Heart left ventricle (tissue), 16 donors: ENCODE measurements at regions of chr1 and their contacts with region 1.

Region 1: DNA sequence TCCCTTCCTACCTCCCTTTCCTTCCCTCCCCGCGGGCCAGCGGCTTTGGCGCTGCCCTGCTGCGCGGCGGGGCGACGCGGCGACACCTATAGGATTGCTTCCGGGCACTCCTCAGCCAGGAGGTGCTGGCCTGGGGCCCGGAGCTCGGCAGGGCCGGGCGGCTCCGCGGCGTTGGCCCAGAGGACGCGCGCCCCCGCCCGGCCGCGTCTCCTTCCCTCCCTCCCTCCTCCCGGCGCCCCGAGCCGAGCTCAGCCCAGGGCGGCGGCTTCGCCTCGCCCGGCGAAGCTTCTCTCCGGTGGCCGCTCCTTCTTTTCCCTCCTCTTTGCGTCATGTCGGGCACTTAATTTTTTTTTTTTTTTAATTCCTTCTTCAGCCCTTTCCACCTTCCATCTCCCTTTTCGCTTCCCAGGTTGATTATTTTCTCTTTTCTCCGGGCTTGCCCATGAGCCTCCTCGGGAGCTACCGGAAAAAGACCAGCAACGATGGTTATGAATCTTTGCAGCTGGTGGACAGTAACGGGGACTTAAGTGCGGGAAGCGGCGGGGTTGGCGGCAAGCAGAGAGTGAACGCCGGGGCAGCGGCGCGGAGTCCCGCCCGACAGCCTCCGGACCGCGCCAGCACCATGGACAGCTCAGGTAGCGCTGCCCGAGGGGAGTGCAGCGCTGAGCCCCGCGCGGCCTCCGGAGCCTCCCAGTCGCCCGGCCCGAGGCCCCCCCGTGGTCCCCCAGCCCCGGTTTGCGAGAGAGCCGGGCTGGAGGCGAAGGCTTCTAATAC is at the start of gene DNAJC6:
- DNase-seq: peak; percentile 69 to 82 (median 73)
- ATAC-seq: peak; percentile 93 to 100 (median 98)
- H3K4me3 ChIP-seq: peak within 1 kb of the TSS; percentile 6 to 65 (median 48)
- H3K27ac ChIP-seq: peak within 1 kb of the TSS in 1 of 12 donors; percentile 4
- H3K4me1 ChIP-seq: peaks cover 0 to 18% (median 5%) of the 10 kb centered on the region in 12 donors
- H3K27me3 ChIP-seq: peaks cover 0 to 27% (median 4%) of the 10 kb centered on the region in 9 donors
- CTCF ChIP-seq: no peak
- POLR2A ChIP-seq: no peak
- total RNA-seq, gene DNAJC6: 7.6 to 14.1 (median 10.0) TPM

Region 2: GRCh38 chr1:65254319-65255034 is 55.0 kb before region 1 on chr1:
- intact Hi-C with region 1: loop called in 1 of 10 experiments (anchors 10 kb)
- DNase-seq: peak; percentile 75 to 90 (median 83)
- ATAC-seq: peak; percentile 63 to 97 (median 92)
- H3K4me3 ChIP-seq: peak overlapping the region; percentile 69 to 99 (median 80)
- H3K27ac ChIP-seq: peak overlapping the region in 9 of 12 donors; percentile 24 to 82 (median 65)
- H3K4me1 ChIP-seq: peaks cover 0 to 28% (median 10%) of the 10 kb centered on the region in 12 donors
- H3K27me3 ChIP-seq: peaks cover 0 to 15% (median 0%) of the 10 kb centered on the region in 9 donors
- CTCF ChIP-seq: peak in 6 of 12 donors; percentile 18 to 50 (median 27)
- POLR2A ChIP-seq: no peak

Region 3: GRCh38 chr1:65265651-65266351 is 43.7 kb before region 1 on chr1:
- intact Hi-C with region 1: loop called in 2 of 10 experiments (anchors 5 kb)
- DNase-seq: peak; percentile 43 to 66 (median 55)
- ATAC-seq: peak; percentile 75 to 96 (median 93)
- H3K4me3 ChIP-seq: peak overlapping the region; percentile 39 to 74 (median 61)
- H3K27ac ChIP-seq: peak overlapping the region in 10 of 12 donors; percentile 22 to 78 (median 58)
- H3K4me1 ChIP-seq: peaks cover 0 to 23% (median 11%) of the 10 kb centered on the region in 12 donors
- H3K27me3 ChIP-seq: peaks cover 0 to 20% (median 0%) of the 10 kb centered on the region in 9 donors
- CTCF ChIP-seq: peak in 11 of 12 donors; percentile 8 to 52 (median 27)
- POLR2A ChIP-seq: no peak

Region 4: DNA sequence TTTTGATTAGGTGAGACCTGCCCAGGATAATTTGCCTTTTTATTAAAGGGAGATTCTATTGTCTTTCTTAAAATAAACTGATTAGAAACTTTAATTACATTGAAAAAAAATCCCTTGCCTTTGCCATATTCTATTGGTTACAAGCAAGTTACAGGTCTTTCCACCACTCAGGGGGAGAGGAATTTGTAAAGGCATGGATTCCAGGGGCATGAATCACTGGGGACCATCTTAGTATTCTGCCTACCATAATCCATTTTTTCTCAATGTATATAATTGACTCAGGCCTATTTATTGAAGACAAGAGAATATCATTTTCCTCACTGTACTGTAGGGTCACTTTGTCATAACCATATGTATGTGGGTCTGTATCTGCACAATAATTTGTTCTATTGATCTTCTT is 358.9 kb after region 1 on chr1:
- intact Hi-C with region 1: no loop called
- DNase-seq: no peak
- ATAC-seq: no peak
- H3K4me3 ChIP-seq: no peak overlapping the region
- H3K27ac ChIP-seq: no peak overlapping the region
- H3K4me1 ChIP-seq: no peaks in the 10 kb centered on the region
- H3K27me3 ChIP-seq: peaks cover 0 to 3% (median 0%) of the 10 kb centered on the region in 9 donors
- CTCF ChIP-seq: no peak
- POLR2A ChIP-seq: no peak

Region 5: GRCh38 chr1:65762081-65762862 is 452.8 kb after region 1 on chr1:
- intact Hi-C with region 1: loop called in 1 of 10 experiments (anchors 5 kb)
- DNase-seq: no peak
- ATAC-seq: no peak
- H3K4me3 ChIP-seq: no peak overlapping the region
- H3K27ac ChIP-seq: no peak overlapping the region
- H3K4me1 ChIP-seq: no peaks in the 10 kb centered on the region
- H3K27me3 ChIP-seq: peaks cover 0 to 8% (median 0%) of the 10 kb centered on the region in 9 donors
- CTCF ChIP-seq: no peak
- POLR2A ChIP-seq: no peak